ENCODE measurements at regions of chr2 and their contacts with region 1.

Region 1: GRCh38 chr2:41869542-41870264 is 178.1 kb upstream of the PKDCC start:
- DNase-seq: peak; percentile 25
- ATAC-seq: peak; percentile 94
- H3K4me3 ChIP-seq: no peak overlapping the region
- H3K27ac ChIP-seq: no peak overlapping the region
- H3K4me1 ChIP-seq: no peaks in the 10 kb centered on the region
- H3K27me3 ChIP-seq: no peaks in the 10 kb centered on the region; a peak in 2 of 4 replicates
- CTCF ChIP-seq: peak; percentile 78 to 90 (median 84)
- EP300 ChIP-seq: no peak
- POLR2A ChIP-seq: no peak
- RAD21 ChIP-seq: peak; percentile 98

Region 2: DNA sequence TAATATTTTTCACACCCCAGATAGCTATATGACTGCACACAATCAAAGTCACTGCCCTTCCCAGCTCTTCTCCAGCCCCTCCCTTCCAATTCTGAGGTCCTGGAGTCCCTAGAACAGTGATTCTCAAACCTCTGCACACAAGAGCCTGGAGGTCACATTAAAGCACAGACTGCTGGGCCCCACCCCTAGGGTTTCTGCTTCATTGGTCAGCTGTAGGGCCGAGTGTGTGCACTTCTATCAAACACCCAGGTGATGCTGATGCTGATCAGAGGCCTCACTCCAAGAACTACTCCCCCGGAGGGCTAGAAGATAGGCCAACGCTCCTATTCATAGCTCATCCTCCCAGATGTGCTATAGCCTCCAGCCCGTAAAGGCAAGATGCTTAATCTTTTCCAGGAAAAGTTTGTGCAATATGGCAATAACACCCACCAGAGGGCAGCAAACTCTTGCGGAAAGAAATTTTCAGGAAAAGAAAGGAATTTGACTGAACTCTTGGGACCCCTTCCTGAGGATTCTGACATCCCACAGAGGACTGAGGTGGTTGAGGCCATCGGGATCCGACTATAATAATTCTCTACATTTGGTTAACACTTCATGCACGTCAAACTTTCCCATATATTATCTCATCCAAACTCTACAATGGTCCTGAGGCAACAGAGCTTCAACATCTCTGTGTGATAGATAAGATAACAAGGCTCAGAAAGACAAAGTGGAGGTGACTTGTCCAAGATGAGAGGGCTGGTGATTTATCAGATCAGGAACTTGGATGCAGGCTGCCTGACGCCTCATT is 16.1 kb before region 1 on chr2:
- CTCF ChIA-PET with region 1: interaction called, 61 read pairs
- POLR2A ChIA-PET with region 1: no interaction called
- RAD21 ChIA-PET with region 1: interaction called, 12 read pairs
- SMC1A ChIA-PET with region 1: interaction called, 19 read pairs
- in situ Hi-C with region 1: no loop called
- intact Hi-C with region 1: no loop called
- DNase-seq: no peak
- ATAC-seq: peak; percentile 47
- H3K4me3 ChIP-seq: no peak overlapping the region
- H3K27ac ChIP-seq: no peak overlapping the region
- H3K4me1 ChIP-seq: no peaks in the 10 kb centered on the region
- H3K27me3 ChIP-seq: no peaks in the 10 kb centered on the region; a peak in 1 of 4 replicates
- CTCF ChIP-seq: peak; percentile 49 to 58 (median 57); a peak in 5 of 6 replicates
- EP300 ChIP-seq: no peak
- POLR2A ChIP-seq: no peak
- RAD21 ChIP-seq: peak; percentile 78

Region 3: DNA sequence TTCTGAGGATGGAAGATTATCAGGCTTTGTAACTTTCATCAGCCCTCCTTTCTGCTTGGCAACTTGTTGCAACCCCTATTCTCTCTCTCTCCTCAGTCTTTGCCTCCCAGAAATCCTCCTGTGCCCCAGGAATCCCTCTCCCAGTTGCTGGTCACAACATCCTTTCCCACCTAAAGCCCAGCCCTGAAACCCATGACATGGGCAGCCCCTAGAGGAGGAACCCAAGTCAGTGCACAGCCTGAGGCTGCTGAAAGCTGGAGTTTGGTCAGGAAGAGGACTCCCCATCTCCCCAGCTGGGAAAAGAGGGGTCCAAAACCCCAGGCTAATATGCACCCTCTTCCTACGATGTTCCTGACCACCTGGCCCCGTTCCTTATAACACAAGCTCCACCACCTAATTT is 207.6 kb after region 1 on chr2:
- CTCF ChIA-PET with region 1: interaction called, 462 read pairs
- POLR2A ChIA-PET with region 1: no interaction called
- RAD21 ChIA-PET with region 1: interaction called, 153 read pairs
- SMC1A ChIA-PET with region 1: interaction called, 198 read pairs
- in situ Hi-C with region 1: no loop called
- intact Hi-C with region 1: no loop called
- DNase-seq: no peak
- ATAC-seq: no peak
- H3K4me3 ChIP-seq: no peak overlapping the region
- H3K27ac ChIP-seq: no peak overlapping the region
- H3K4me1 ChIP-seq: no peaks in the 10 kb centered on the region
- H3K27me3 ChIP-seq: peaks cover 0 to 2% of the 10 kb centered on the region in 2 experiments; a peak in 2 of 4 replicates
- CTCF ChIP-seq: peak in 2 of 3 experiments; percentile 13; a peak in 1 of 6 replicates
- EP300 ChIP-seq: no peak
- POLR2A ChIP-seq: no peak
- RAD21 ChIP-seq: peak; percentile 67

Region 4: DNA sequence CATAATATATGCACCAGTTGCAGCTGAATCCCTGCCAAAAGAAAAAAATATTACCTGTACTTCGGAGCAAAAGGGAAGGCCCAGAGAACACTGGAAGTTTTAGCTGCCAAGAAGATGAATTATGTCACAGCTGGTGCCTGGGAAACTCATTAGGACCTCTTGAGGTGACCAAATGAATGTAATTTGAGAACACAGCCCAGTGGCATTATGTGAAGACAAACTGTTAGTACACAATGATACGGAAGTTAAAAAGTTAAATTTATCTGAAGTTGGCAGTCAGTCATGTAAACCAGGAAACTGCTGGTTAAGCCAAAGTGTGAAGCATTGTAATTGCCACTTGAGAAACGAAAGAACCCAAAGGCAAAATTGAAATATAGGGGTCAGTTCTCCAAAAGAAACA is 380.2 kb after region 1 on chr2:
- CTCF ChIA-PET with region 1: no interaction called
- POLR2A ChIA-PET with region 1: no interaction called
- RAD21 ChIA-PET with region 1: no interaction called
- SMC1A ChIA-PET with region 1: no interaction called
- in situ Hi-C with region 1: no loop called
- intact Hi-C with region 1: loop called (anchors 10 kb)
- DNase-seq: no peak
- ATAC-seq: no peak
- H3K4me3 ChIP-seq: no peak overlapping the region
- H3K27ac ChIP-seq: no peak overlapping the region
- H3K4me1 ChIP-seq: no peaks in the 10 kb centered on the region
- H3K27me3 ChIP-seq: no peaks in the 10 kb centered on the region
- CTCF ChIP-seq: no peak
- EP300 ChIP-seq: no peak
- POLR2A ChIP-seq: no peak
- RAD21 ChIP-seq: no peak

Region 5: GRCh38 chr2:42339191-42339912 is 469.6 kb after region 1 on chr2:
- CTCF ChIA-PET with region 1: interaction called, 3 read pairs
- POLR2A ChIA-PET with region 1: no interaction called
- RAD21 ChIA-PET with region 1: no interaction called
- SMC1A ChIA-PET with region 1: no interaction called
- in situ Hi-C with region 1: loop called (anchors 10 kb)
- intact Hi-C with region 1: no loop called
- DNase-seq: no peak
- ATAC-seq: peak; percentile 43
- H3K4me3 ChIP-seq: no peak overlapping the region
- H3K27ac ChIP-seq: no peak overlapping the region
- H3K4me1 ChIP-seq: no peaks in the 10 kb centered on the region
- H3K27me3 ChIP-seq: no peaks in the 10 kb centered on the region
- CTCF ChIP-seq: no peak
- EP300 ChIP-seq: no peak
- POLR2A ChIP-seq: no peak
- RAD21 ChIP-seq: no peak